ENCODE measurements at regions of chr2 and their contacts with region 1.

Region 1: GRCh38 chr2:182980115-182980514 is 58.1 kb downstream of the NCKAP1 start:
- DNase-seq: no peak
- H3K4me3 ChIP-seq: no peak overlapping the region
- H3K27ac ChIP-seq: no peak overlapping the region
- H3K4me1 ChIP-seq: no peaks in the 10 kb centered on the region
- H3K27me3 ChIP-seq: no peaks in the 10 kb centered on the region
- CTCF ChIP-seq: peak; percentile 53 to 61 (median 55)
- EP300 ChIP-seq: no peak
- POLR2A ChIP-seq: no peak

Region 2: GRCh38 chr2:181586569-181587081 is 1393.5 kb before region 1 on chr2:
- in situ Hi-C with region 1: no loop called
- intact Hi-C with region 1: no loop called
- DNase-seq: no peak
- H3K4me3 ChIP-seq: no peak overlapping the region
- H3K27ac ChIP-seq: no peak overlapping the region
- H3K4me1 ChIP-seq: no peaks in the 10 kb centered on the region
- H3K27me3 ChIP-seq: peaks cover 3% of the 10 kb centered on the region
- CTCF ChIP-seq: no peak
- EP300 ChIP-seq: no peak
- POLR2A ChIP-seq: no peak

Region 3: GRCh38 chr2:182186132-182186735 is 793.9 kb before region 1 on chr2:
- in situ Hi-C with region 1: loop called in 2 of 4 experiments (anchors 25 kb)
- intact Hi-C with region 1: no loop called
- DNase-seq: no peak
- H3K4me3 ChIP-seq: no peak overlapping the region
- H3K27ac ChIP-seq: no peak overlapping the region
- H3K4me1 ChIP-seq: no peaks in the 10 kb centered on the region
- H3K27me3 ChIP-seq: no peaks in the 10 kb centered on the region
- CTCF ChIP-seq: peak; percentile 80 to 88 (median 84)
- EP300 ChIP-seq: no peak
- POLR2A ChIP-seq: no peak

Region 4: GRCh38 chr2:182763311-182763912 is 216.7 kb before region 1 on chr2:
- in situ Hi-C with region 1: loop called in 2 of 4 experiments (anchors 10 to 25 kb)
- intact Hi-C with region 1: no loop called
- DNase-seq: no peak
- H3K4me3 ChIP-seq: no peak overlapping the region
- H3K27ac ChIP-seq: peak overlapping the region in 1 of 4 donors; percentile 38
- H3K4me1 ChIP-seq: peaks cover 0 to 3% (median 0%) of the 10 kb centered on the region in 4 donors
- H3K27me3 ChIP-seq: no peaks in the 10 kb centered on the region
- CTCF ChIP-seq: peak; percentile 56 to 64 (median 61)
- EP300 ChIP-seq: no peak
- POLR2A ChIP-seq: no peak

Region 5: DNA sequence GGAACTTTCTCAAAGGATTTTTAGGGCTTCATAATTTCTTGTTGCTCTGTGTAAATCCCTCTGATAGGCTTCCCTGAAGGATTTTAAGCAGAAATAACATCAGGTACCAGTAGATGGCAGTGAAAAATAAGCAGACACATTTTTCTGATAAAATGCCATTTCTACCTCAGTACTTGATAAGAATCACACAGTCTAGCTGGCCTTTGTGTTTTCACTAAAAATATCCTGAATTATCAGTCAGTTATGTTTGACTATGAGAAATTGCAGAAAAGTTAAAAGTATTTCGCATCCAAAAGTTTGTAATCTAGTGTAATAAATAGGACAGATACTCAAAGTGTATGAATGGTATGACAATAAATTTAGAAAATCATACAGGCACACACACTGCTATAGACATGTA is 195.3 kb before region 1 on chr2:
- in situ Hi-C with region 1: loop called in 1 of 4 experiments (anchors 10 kb)
- intact Hi-C with region 1: no loop called
- DNase-seq: no peak
- H3K4me3 ChIP-seq: no peak overlapping the region
- H3K27ac ChIP-seq: no peak overlapping the region
- H3K4me1 ChIP-seq: no peaks in the 10 kb centered on the region
- H3K27me3 ChIP-seq: no peaks in the 10 kb centered on the region
- CTCF ChIP-seq: peak; percentile 24 to 48 (median 43)
- EP300 ChIP-seq: no peak
- POLR2A ChIP-seq: no peak

Region 6: DNA sequence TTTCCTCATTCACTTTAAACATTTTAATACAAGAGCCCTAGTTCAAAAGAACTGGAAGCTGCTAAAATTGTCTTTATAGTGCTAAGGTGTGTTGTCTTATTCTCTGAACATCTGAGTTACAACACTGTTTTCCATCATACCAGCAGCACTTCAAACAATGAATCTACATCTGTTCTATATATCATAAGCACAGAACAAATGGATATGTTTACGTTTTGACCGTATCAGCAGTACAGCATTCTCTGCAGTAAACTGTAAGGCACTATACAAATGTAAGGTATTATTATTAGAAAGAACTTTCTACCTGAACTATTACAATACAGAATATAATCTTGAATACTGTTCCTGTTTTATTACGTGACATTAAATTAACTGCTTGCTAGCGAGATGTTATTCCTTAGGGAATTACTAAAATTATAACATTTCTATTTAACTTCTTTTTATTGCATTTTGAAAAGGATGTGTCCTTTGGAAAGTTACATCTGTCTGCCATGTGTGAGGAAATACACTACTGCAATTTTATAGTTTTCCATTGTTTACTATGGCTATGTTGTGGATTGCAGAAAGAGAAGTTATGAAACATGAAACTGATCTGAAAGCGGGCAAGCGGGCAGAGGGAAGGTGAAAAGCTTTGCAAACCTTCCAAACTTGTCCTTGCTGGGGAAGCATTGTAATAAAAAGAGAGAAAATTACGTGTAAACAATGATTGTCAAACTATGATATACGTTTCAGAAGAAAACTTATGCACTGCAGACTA is 44.4 kb after region 1 on chr2:
- in situ Hi-C with region 1: no loop called
- intact Hi-C with region 1: no loop called
- DNase-seq: no peak
- H3K4me3 ChIP-seq: no peak overlapping the region
- H3K27ac ChIP-seq: peak overlapping the region in 3 of 4 donors; percentile 20 to 54 (median 32)
- H3K4me1 ChIP-seq: peaks cover 10 to 50% (median 29%) of the 10 kb centered on the region in 4 donors
- H3K27me3 ChIP-seq: no peaks in the 10 kb centered on the region
- CTCF ChIP-seq: no peak
- EP300 ChIP-seq: no peak
- POLR2A ChIP-seq: no peak